Posterior cingulate gyrus (tissue), 11 donors: ENCODE measurements at regions of chr12 and their contacts with region 1.

Region 1: DNA sequence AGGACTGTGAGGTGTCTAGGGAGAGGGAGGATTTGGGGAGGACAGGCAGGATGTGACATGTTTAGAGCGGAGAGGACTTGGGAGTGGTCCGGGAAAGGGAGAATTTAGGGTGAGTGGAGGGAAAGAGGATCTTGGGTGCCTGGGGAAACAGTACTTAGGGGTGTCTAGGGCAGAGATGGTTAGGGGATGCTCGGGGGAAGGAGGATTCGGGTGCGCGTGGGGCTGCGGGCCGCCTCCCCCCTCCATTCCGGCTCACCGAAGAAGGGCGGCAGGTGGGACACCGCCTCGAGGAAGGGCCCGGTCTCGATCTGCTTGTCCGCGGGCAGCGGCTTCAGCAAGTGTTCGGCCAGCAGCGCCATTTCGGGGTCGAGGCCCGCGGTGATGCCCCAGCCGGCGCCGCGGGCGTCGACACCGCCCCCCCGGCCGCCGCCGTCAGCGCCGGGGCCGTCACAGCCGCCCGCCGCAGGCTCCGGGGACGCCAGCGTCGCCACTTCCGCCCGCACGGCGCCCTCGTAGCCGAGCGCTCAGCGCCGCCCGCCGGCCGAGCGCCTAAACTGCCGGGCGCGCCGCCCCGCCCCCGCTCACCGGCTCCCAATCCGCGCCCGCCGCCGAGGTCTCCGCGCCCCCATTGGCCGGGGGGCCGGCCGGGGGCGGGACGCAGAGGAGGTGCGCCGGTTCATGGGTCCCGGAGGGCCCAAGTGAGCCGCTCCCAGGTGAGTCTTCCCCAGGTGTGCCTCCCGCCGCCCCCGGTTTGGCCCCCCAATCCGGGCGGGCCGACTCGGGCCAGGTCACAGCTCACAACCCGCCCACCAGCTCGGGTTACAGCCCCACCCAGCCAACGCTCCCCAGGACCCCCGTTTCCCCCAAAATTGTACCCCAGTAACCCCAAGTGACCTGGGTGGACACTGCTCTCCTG is at the start of gene GLTP:
- DNase-seq: peak; percentile 59 to 98 (median 77)

Region 2: GRCh38 chr12:109763201-109763841 is 117.0 kb before region 1 on chr12:
- intact Hi-C with region 1: no loop called
- DNase-seq: peak in 2 of 10 donors; percentile 11 to 43

Region 3: GRCh38 chr12:109804820-109805761 is 75.2 kb before region 1 on chr12:
- intact Hi-C with region 1: loop called (anchors 1 kb)
- DNase-seq: peak; percentile 43 to 95 (median 76)

Region 4: GRCh38 chr12:109858764-109859163 is 21.5 kb before region 1 on chr12:
- intact Hi-C with region 1: loop called (anchors 1 kb)
- DNase-seq: no peak

Region 5: DNA sequence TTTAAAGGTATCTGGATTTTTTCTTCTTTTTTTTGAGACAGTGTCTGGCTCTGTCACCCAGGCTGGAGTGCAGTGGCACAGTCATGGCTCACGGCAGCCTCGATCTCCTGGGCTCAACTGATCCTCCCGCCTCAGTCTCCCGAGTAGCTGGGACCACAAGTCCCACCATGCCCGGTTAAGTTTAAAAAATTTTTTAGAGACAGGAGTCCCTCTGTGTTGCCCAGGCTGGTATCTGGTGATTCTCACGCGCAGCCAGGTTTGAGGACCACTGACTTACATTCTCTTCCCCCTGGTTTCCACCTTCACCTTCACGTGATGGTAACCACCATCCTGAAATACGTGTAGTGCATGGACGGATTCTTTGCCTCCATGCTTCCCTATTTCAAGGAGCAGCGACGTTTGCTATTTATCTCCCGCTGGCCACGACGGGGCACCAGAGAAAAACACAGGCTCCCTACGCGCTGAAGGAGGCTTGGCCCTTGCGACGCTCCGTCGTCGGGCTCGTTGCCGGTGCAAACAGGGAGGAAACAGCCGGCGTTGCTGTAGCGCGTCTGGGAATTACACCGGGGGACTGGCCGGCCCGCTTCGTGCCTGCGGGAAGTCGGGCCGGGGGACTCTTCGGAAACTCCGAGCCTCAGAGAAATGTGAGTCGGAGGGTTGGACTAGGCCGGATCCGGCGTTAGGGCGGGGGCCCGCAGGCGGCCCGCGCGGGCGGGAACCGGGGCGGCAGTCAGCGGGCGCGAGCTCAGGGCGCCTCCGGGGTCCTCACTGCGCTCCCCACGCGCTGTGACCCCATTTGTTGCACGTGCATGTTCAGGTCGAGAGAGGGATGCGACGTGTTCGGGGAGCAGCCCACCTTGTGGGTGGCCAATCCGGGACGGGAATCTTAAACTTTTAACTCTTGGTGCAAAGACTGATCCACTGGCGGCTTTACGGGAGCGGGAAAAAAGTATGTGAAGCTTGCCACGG is 19.8 kb after region 1 on chr12 and contains the start of gene TCHP:
- intact Hi-C with region 1: loop called (anchors 1 kb)
- DNase-seq: peak; percentile 82 to 98 (median 88)